Calu3 (cell line): ENCODE measurements at regions of chr7 and their contacts with region 1.

Region 1: GRCh38 chr7:86926732-86927131 is 132.7 kb downstream of the ELAPOR2 start:
- DNase-seq: peak; percentile 3
- H3K4me3 Mint-ChIP-seq: no peak overlapping the region
- H3K27ac Mint-ChIP-seq: no peak overlapping the region
- H3K4me1 Mint-ChIP-seq: no peaks in the 10 kb centered on the region
- H3K27me3 Mint-ChIP-seq: no peaks in the 10 kb centered on the region
- CTCF ChIP-seq: peak; percentile 21

Region 2: DNA sequence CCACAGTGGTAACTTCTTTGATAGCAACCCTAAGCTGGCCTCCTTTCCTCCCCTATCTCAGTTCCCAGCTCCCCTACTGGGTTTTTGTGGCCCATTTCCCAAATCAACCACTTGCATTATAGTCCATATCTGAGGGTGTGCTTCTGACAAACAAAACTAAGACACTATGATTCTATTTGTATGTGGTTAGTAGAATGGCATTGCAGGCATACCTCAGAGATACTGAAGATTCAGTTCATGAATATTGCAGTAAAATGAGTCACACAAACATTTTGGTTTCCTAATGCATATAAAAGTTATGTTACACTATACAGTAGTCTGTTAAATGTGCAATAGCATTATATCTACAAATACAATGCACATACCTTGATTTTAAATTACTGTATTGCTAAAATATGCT is 308.2 kb after region 1 on chr7:
- CTCF ChIA-PET with region 1: no interaction called
- intact Hi-C with region 1: loop called (anchors 5 kb)
- DNase-seq: no peak
- H3K4me3 Mint-ChIP-seq: no peak overlapping the region
- H3K27ac Mint-ChIP-seq: no peak overlapping the region
- H3K4me1 Mint-ChIP-seq: peaks cover 8% of the 10 kb centered on the region
- H3K27me3 Mint-ChIP-seq: peaks cover 16% of the 10 kb centered on the region
- CTCF ChIP-seq: no peak